Cardiac septum (tissue), 1 donor: ENCODE measurements at regions of chr20 and their contacts with region 1.

Region 1: GRCh38 chr20:62121776-62122631 is at the start of gene LSM14B:
- DNase-seq: peak; percentile 98
- total RNA-seq, gene LSM14B: 51.0 TPM

Region 2: GRCh38 chr20:62065669-62066338 is 56.2 kb before region 1 on chr20 and contains the start of gene TAF4:
- intact Hi-C with region 1: loop called (anchors 2 kb)
- DNase-seq: peak; percentile 90
- total RNA-seq, gene TAF4: 13.6 TPM

Region 3: DNA sequence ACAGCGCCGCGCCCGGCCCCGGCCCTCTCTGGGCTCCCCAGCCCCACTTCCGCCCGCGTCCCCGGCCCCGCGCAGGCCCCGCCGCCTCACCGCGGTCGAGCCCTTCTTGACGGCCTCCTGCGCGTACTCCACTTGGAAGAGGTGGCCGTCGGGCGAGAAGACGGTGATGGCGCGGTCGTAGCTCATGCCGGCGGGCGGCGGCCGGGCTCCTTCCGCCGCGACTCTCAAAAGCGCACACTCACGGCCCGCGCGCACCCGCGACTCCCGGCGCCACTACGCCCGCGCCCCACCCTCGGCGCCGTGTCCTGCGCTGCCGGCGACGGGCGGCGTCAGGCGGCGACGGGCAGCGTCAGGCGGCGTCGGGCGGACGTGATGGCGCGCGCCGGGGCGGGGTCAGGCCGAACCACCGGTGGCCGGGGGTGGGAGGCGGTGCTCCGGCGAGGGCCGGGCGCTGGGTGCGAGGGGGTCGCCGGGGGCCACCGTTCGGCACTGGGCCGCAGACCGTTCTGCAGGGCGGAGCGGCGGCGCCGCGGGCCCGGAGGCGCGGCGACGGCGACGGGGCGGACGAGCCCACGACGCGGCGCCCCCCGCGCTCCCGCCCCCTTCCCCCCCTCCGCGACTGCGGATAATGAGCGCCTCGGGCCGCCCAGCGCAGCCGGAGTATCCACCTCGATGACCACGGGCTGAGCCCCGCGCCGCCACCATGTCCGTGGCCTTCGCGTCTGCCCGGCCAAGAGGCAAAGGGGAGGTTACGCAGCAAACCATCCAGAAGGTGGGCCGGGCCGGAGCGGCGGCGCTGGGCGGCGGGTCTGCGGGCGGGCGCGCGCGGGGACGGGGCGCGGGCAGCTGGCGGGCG is 21.3 kb after region 1 on chr20 and contains the starts of genes PSMA7 and SS18L1:
- intact Hi-C with region 1: loop called (anchors 2 kb)
- DNase-seq: peak; percentile 95
- total RNA-seq, gene PSMA7: 198 TPM
- total RNA-seq, gene SS18L1: 8.0 TPM

Region 4: DNA sequence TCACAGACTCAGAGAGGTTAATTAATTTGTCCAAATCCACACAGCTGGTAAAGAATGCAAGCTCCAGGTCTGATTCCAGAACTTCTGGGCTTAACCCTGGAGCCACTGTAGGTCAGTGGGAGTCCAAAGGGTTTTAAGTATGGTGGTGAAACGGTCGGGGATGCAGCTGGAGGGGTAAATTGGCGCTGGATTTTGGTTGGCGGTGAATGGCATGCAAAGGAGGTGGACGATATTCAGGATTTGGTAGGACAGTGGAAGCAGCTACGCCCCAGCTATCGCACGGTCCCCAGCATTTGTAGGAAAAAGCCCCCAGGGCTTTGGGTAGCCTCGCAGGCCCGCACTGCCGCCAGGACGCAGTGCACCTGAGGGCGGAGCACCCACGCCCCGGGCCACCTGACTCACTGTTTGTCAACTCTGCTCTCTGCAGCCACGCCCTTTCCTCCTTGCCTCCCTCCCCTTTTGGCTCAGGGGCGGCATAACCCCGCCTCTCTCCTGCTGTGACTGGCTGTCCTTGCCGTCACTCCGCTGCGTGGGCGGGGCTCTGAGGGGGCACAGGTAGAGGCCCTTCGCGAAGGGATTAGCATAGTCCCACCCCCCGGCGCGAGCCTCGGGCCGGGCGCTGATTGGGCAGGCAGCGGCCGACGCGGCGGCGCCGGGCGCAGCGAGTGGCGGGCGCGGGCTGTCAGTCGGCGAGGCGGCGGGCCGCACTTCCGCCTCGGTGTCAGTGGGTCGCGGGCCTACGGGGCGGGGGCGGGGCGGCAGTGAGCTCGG is 116.0 kb after region 1 on chr20 and contains the start of gene OSBPL2:
- intact Hi-C with region 1: loop called (anchors 5 kb)
- DNase-seq: peak; percentile 100
- total RNA-seq, gene OSBPL2: 55.1 TPM

Region 5: GRCh38 chr20:62875419-62876361 is 753.7 kb after region 1 on chr20:
- intact Hi-C with region 1: no loop called
- DNase-seq: no peak